CD4-positive, alpha-beta T cell (primary cell): ENCODE measurements at regions of chr17 and their contacts with region 1.

Region 1: DNA sequence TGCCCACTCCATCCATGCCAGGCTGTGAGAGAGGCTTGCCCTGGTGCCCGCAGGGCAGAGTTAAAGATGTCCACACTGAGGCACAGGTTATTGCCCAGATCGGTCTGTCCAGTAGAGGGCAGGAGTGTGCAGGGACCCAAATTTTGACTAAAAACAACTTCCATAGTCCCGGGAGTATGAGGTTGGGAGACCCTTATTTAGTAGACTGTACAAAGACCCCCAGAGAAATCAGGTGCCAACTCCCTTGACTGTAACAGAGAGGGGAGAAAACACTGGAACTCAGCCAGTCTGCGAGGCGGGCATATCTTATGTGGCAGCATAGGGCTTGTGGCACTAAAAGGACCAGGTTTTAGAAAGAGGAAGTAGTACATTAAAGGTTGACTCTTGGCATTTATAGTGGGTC is 43.4 kb downstream of the HNF1B start:
- DNase-seq: peak in 11 of 14 experiments; percentile 7 to 54 (median 19)
- ATAC-seq: peak; percentile 46
- H3K4me3 ChIP-seq: no peak overlapping the region
- H3K4me3 Mint-ChIP-seq: no peak overlapping the region
- H3K27ac ChIP-seq: no peak overlapping the region
- H3K27ac Mint-ChIP-seq: no peak overlapping the region
- H3K4me1 ChIP-seq: peaks cover 2% of the 10 kb centered on the region
- H3K4me1 Mint-ChIP-seq: no peaks in the 10 kb centered on the region
- H3K27me3 ChIP-seq: peaks cover under 1 to 6% of the 10 kb centered on the region in 2 experiments
- H3K27me3 Mint-ChIP-seq: peaks cover 39% of the 10 kb centered on the region
- CTCF ChIP-seq: peak; percentile 52

Region 2: DNA sequence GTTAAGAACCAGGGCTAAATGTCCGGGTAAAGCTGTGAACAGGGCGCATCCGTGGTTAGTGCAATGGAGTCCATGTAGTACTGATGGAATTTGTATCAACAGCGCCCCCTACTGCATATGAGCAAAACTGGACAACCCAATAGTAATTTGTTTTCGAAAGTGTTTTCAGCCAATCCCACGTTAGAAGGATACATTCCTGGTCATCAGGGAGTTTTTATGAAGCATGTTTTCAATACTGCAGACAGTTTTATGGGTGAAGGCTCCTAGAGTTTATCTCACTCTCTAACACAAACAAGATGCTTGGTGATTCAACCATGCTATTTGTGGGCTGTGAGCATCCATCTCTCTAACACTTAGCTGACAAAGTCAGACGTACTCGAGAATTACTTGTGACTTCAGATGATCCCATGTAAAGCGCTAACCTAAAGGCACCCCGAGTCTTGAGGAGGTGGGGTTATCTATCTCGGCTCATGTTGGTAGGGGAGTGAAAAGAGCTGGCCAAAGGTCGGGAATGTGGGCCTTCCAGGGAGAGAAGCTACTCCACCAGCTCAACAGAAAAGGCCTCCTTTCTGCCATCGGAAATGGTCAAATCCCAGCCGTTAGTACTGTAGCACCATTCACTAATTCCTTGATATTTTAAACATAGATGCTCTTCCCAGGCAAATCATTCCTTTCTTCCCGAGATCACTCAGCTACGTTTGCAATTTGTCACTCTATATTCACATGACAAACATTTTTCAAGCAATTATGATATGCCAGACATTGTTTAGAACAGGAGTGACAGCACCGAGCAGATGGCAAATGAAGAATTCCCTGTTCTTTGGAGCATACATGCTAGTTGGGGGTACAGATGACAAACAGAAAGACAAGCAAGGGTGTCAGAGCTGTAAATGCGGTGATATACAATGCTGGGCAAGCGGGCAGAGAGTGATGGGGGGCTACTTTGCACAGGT is 90.2 kb after region 1 on chr17:
- CTCF ChIA-PET with region 1: no interaction called
- POLR2A ChIA-PET with region 1: no interaction called
- intact Hi-C with region 1: loop called in 1 of 2 experiments (anchors 1 kb)
- DNase-seq: peak in 6 of 14 experiments; percentile 7 to 69 (median 44)
- ATAC-seq: no peak
- H3K4me3 ChIP-seq: no peak overlapping the region
- H3K4me3 Mint-ChIP-seq: no peak overlapping the region
- H3K27ac ChIP-seq: no peak overlapping the region
- H3K27ac Mint-ChIP-seq: no peak overlapping the region
- H3K4me1 ChIP-seq: no peaks in the 10 kb centered on the region
- H3K4me1 Mint-ChIP-seq: no peaks in the 10 kb centered on the region
- H3K27me3 ChIP-seq: peaks cover 9 to 13% of the 10 kb centered on the region in 2 experiments
- H3K27me3 Mint-ChIP-seq: peaks cover 57% of the 10 kb centered on the region
- CTCF ChIP-seq: peak; percentile 49